Kidney (tissue), 22 donors: ENCODE measurements at regions of chr2 and their contacts with region 1.

Region 1: DNA sequence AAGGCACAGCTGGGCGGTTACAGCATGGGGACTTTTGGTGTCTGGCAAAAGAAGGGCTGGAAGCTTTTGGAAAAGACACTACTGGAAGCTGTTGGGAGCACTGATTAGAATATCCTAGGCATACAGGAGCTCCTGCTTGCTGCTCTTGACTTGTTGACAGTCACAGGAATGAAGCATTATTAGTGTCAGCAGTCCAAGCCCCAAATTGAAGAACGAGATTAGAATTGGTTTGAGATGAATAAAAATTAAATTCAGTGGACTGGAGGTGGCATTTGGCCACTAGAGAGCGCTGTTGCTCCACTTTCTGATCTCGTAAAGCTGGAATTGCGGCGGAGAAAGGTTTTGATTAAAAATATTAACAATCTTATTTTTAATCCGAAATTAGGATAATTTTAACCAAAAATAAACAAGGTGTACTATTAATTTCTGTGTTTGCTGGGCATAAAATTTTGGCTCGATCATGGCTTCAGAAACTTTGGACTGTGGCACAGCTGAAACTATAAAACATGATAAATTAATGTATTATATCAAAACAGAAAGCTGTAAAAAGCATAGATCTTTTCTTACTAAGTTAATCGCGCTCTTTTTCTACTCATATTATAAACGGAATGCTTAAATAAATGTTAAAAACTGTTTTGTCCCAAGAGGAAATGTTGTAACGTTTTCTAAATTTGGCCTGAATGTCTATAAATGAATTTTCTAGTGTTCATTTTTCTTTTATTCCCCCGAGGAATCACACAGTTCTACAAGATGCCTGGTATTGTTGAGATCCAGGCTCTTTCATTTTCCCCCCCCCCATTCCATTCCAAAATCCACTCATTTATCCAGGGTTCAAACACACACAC is 2.4 kb upstream of the HOXD8 start:
- DNase-seq: peak; percentile 81 to 94 (median 88)
- H3K4me3 ChIP-seq: peak overlapping the region; percentile 18 to 85 (median 59)
- H3K27ac ChIP-seq: peak overlapping the region; percentile 45 to 94
- H3K4me1 ChIP-seq: peaks cover 2 to 10% (median 6%) of the 10 kb centered on the region in 3 donors
- H3K27me3 ChIP-seq: no peaks in the 10 kb centered on the region
- CTCF ChIP-seq: peak; percentile 88

Region 2: GRCh38 chr2:176435729-176436128 is 308.6 kb after region 1 on chr2:
- intact Hi-C with region 1: no loop called
- DNase-seq: peak in 3 of 5 donors; percentile 73 to 90 (median 90)
- H3K4me3 ChIP-seq: no peak overlapping the region
- H3K27ac ChIP-seq: no peak overlapping the region
- H3K4me1 ChIP-seq: no peaks in the 10 kb centered on the region
- H3K27me3 ChIP-seq: no peaks in the 10 kb centered on the region
- CTCF ChIP-seq: no peak

Region 3: DNA sequence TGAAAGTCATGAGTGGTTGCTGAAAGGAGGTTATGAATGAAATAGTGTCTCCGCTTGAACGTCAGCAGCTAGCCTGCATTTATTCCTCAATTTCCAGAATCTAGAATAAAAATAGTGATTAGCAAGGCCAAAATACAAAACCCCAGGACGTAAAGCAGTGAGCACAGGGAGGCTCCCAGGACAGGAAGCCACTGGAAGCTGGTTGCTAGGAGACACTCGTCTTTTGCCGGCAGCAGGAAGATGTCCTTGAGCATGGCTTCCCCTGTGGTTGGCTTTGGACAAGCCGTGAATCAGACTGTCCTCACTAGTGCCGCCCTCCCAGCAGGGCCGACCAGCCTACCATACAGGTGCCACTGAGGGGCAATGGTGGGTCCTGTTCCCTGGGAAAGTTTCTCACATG is 516.5 kb after region 1 on chr2:
- intact Hi-C with region 1: loop called (anchors 10 kb)
- DNase-seq: peak in 4 of 5 donors; percentile 62 to 80 (median 68)
- H3K4me3 ChIP-seq: no peak overlapping the region
- H3K27ac ChIP-seq: no peak overlapping the region
- H3K4me1 ChIP-seq: peaks cover 0 to 2% (median 0%) of the 10 kb centered on the region in 3 donors
- H3K27me3 ChIP-seq: no peaks in the 10 kb centered on the region
- CTCF ChIP-seq: no peak

Region 4: DNA sequence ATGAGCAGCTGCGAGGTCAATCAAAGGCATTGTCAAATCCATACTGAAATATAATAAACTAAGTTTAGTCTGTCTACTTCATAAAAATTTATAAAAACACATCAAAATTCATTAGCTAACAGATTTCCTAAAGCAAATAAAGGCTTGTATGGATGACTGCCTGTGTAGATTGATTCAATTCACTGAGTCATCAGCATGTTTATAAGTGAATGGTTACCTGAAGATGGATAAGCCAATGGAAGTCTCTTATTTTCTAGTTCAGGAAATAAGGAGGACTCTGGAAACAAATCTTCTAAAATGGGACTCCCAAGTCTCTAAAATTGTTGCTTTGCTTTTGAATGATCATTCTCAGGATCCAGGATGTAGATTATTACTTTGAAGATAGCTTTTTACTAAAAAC is 1028.5 kb after region 1 on chr2:
- intact Hi-C with region 1: loop called (anchors 10 kb)
- DNase-seq: no peak
- H3K4me3 ChIP-seq: no peak overlapping the region
- H3K27ac ChIP-seq: no peak overlapping the region
- H3K4me1 ChIP-seq: no peaks in the 10 kb centered on the region
- H3K27me3 ChIP-seq: no peaks in the 10 kb centered on the region
- CTCF ChIP-seq: no peak